Sigmoid colon (tissue), 7 donors: ENCODE measurements at regions of chr6 and their contacts with region 1.

Region 1: GRCh38 chr6:41545703-41546474 is at the start of gene FOXP4:
- DNase-seq: peak; percentile 96
- H3K4me3 ChIP-seq: peak within 1 kb of the TSS; percentile 57 to 96 (median 95)
- H3K27ac ChIP-seq: peak within 1 kb of the TSS; percentile 86 to 92 (median 88)
- H3K4me1 ChIP-seq: peaks cover 0 to 48% (median 37%) of the 10 kb centered on the region in 4 donors
- H3K27me3 ChIP-seq: no peaks in the 10 kb centered on the region
- CTCF ChIP-seq: no peak
- EP300 ChIP-seq: no peak
- POLR2A ChIP-seq: no peak
- total RNA-seq, gene FOXP4: 4.1 to 14.1 (median 5.8) TPM

Region 2: DNA sequence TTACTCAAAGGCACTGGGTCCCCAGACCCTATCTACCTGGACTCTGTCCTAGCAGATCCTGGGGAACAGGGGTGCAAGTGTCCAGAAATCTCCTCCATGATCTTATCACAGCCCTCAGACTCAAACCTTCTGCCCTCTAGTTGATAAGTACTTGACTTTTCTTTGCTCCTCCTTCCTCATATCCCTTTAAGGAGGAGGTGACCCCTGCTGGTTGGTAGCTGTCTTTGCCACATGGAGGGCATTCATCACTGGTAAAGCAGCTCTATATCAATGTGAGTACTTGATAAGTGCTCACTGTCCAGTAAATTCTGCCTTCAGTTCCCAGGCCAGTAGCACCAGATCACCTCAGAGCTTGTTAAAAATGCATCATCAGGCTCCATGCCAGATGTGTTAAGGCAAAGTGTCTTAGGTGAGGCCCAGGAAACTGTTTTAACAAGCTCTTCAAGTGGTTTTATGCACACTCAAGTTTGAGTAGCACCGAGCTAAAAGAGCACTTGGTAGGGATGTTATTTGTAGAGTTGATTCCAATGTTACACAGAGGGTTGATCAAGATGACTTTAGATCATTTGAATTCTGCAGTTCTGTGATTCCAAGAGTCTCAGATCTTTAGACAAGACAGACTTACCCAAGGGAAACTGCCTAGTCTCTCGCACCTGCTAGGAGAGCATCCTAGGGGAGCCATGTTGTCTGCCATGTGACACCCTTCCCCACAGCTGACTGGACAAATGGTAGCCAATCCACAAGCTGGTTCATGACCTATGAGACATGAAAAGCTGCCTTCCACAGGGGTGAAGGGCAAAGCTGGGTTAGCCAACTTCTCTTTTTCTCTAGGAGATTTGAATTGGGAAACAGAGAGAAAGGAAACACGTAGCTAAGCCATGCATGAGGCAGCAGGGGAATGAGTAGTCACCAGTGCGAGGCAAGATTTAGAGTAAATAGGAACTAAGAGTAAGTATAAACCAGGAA is 363.5 kb before region 1 on chr6:
- intact Hi-C with region 1: no loop called
- DNase-seq: no peak
- H3K4me3 ChIP-seq: no peak overlapping the region
- H3K27ac ChIP-seq: peak overlapping the region in 1 of 4 donors; percentile 32
- H3K4me1 ChIP-seq: no peaks in the 10 kb centered on the region
- H3K27me3 ChIP-seq: peaks cover 0 to 3% (median 0%) of the 10 kb centered on the region in 3 donors
- CTCF ChIP-seq: peak in 1 of 4 experiments; percentile 9
- EP300 ChIP-seq: peak in 1 of 4 donors; percentile 64
- POLR2A ChIP-seq: no peak

Region 3: GRCh38 chr6:41449399-41450245 is 96.3 kb before region 1 on chr6:
- intact Hi-C with region 1: loop called (anchors 5 kb)
- DNase-seq: peak; percentile 89
- H3K4me3 ChIP-seq: no peak overlapping the region
- H3K27ac ChIP-seq: peak overlapping the region; percentile 47 to 90 (median 77)
- H3K4me1 ChIP-seq: peaks cover 0 to 64% (median 58%) of the 10 kb centered on the region in 4 donors
- H3K27me3 ChIP-seq: no peaks in the 10 kb centered on the region
- CTCF ChIP-seq: no peak
- EP300 ChIP-seq: peak in 2 of 4 donors; percentile 19 to 57
- POLR2A ChIP-seq: no peak

Region 4: GRCh38 chr6:41505122-41506049 is 40.5 kb before region 1 on chr6:
- intact Hi-C with region 1: loop called (anchors 1 kb)
- DNase-seq: peak; percentile 95
- H3K4me3 ChIP-seq: peak overlapping the region; percentile 14 to 49 (median 38)
- H3K27ac ChIP-seq: peak overlapping the region; percentile 73 to 91 (median 76)
- H3K4me1 ChIP-seq: peaks cover 0 to 51% (median 33%) of the 10 kb centered on the region in 4 donors
- H3K27me3 ChIP-seq: no peaks in the 10 kb centered on the region
- CTCF ChIP-seq: no peak
- EP300 ChIP-seq: no peak
- POLR2A ChIP-seq: no peak

Region 5: DNA sequence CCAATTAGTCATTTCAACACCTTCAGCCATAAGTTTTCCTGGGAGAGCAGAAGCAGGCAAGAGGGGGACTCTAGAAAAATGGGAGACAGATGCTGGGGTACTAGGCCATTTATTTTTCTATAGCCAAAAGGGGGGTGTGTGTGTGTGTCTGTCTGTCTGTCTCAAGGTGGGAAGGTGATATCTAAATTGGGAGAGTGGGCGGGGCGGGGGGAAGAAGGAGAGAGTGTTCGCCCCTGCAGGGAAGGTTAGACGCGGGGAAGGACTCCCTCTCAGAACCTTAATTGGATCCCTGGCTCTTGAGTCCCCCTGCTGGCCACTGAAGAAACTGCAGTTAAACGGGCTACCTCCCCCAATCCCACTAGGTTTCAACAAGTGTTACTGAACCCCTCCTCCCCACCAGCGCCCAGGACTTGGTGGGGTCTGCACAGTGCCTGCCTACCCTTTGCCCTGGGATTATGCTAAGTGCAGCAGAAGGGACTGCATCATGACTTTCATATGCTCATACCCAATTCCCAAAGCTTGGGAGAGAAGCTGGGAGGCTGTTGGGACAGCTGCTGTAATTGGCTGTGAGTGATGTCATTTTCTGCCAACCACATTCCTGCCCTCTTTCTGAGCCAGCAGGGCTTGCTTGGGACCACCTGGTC is 46.1 kb after region 1 on chr6:
- intact Hi-C with region 1: loop called (anchors 5 kb)
- DNase-seq: peak; percentile 86
- H3K4me3 ChIP-seq: no peak overlapping the region
- H3K27ac ChIP-seq: no peak overlapping the region
- H3K4me1 ChIP-seq: no peaks in the 10 kb centered on the region
- H3K27me3 ChIP-seq: no peaks in the 10 kb centered on the region
- CTCF ChIP-seq: peak; percentile 90 to 95 (median 92)
- EP300 ChIP-seq: no peak
- POLR2A ChIP-seq: no peak

Region 6: DNA sequence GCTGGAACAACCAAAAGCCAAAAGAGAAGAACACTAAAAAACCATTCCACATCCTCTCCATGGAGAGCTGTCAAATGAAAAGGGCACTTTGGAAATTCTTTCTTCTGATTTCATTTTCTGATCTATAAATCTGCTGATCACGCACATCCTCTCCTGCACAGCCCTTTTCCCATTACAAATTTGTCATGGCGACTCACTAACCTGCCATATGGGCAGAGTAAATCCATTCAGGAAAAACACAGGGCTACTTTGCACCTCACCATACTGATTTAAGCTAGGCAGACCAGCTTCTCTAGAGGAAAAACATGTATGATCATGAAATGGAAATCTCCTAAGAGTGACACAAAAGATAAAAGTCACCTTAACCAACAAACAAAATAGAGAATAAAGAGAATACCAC is 267.6 kb after region 1 on chr6:
- intact Hi-C with region 1: no loop called
- DNase-seq: no peak
- H3K4me3 ChIP-seq: no peak overlapping the region
- H3K27ac ChIP-seq: no peak overlapping the region
- H3K4me1 ChIP-seq: no peaks in the 10 kb centered on the region
- H3K27me3 ChIP-seq: no peaks in the 10 kb centered on the region
- CTCF ChIP-seq: no peak
- EP300 ChIP-seq: no peak
- POLR2A ChIP-seq: no peak

Region 7: DNA sequence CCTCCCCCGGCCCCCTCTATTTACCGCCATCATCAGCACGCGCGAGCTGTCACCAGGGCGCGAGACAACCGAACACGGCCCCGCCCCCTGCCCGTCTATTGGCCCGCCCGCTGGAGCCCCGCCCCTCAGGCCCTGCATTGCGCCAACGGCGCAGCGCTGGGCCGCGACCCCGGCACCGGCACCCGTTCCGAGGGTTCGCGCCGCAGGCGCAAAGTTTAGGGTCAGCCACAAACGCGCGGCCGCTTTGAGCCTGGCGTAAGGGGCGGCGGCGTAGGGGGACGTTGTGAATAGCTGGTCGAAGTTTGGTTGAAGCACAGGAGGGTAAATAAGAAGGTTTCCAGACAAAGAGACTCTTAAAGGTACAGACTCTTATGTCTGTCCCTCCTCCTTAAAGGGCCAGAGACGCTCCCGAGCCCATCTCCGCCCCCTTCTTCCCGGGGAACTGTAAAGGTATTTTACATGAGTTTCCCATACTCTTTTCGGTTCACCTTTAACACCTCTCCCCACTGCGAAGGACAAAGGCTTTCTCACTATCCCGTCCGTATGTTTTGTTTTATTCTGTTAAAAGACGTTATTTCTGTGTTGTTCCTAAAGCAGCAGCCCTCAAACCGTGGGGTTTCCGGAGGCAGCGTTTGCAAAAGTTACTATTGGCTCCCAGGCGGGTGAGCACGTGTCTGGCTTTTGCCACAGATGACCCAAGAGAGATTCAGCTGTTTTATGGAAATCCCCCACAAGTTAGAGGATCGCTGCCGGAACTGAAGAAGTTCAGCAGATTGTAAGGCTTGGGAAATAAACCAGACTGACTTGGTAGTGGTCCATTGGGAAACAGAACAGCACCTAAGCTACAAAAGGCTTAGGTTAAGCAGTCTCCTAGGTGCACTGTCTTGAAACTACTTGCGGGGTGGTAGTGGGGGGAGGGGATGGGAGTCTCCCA is 349.7 kb after region 1 on chr6 and contains the start of gene USP49:
- intact Hi-C with region 1: no loop called
- DNase-seq: peak; percentile 94
- H3K4me3 ChIP-seq: peak within 1 kb of the TSS; percentile 58 to 79 (median 75)
- H3K27ac ChIP-seq: peak within 1 kb of the TSS; percentile 81 to 89 (median 84)
- H3K4me1 ChIP-seq: peaks cover 0 to 20% (median 12%) of the 10 kb centered on the region in 4 donors
- H3K27me3 ChIP-seq: no peaks in the 10 kb centered on the region
- CTCF ChIP-seq: no peak
- EP300 ChIP-seq: no peak
- POLR2A ChIP-seq: no peak
- total RNA-seq, gene USP49: 2.1 to 10.0 (median 3.1) TPM